CD8-positive, alpha-beta memory T cell (primary cell): ENCODE measurements at regions of chr11 and their contacts with region 1.

Region 1: GRCh38 chr11:535519-536454 is at the start of gene HRAS:
- DNase-seq: peak; percentile 94 to 97 (median 96)
- H3K4me3 ChIP-seq: peak within 1 kb of the TSS; percentile 64
- H3K4me3 Mint-ChIP-seq: peak within 1 kb of the TSS; percentile 88 to 98 (median 93)
- H3K27ac ChIP-seq: peak within 1 kb of the TSS; percentile 86
- H3K27ac Mint-ChIP-seq: peak within 1 kb of the TSS; percentile 93 to 100 (median 97)
- H3K4me1 ChIP-seq: peaks cover 37% of the 10 kb centered on the region
- H3K4me1 Mint-ChIP-seq: peaks cover 3 to 32% (median 11%) of the 10 kb centered on the region in 3 donors
- H3K27me3 ChIP-seq: no peaks in the 10 kb centered on the region
- H3K27me3 Mint-ChIP-seq: peaks cover 0 to 4% of the 10 kb centered on the region in 2 donors
- total RNA-seq, gene HRAS: 86.9 to 91.5 TPM

Region 2: GRCh38 chr11:506238-506994 is 29.4 kb before region 1 on chr11:
- CTCF ChIA-PET with region 1: interaction called, 3 read pairs
- POLR2A ChIA-PET with region 1: interaction called, 16 read pairs
- DNase-seq: peak; percentile 96 to 98 (median 96)
- H3K4me3 ChIP-seq: peak overlapping the region; percentile 95
- H3K4me3 Mint-ChIP-seq: peak overlapping the region; percentile 89 to 100 (median 98)
- H3K27ac ChIP-seq: peak overlapping the region; percentile 100
- H3K27ac Mint-ChIP-seq: peak overlapping the region; percentile 97 to 100 (median 100)
- H3K4me1 ChIP-seq: peaks cover 31% of the 10 kb centered on the region
- H3K4me1 Mint-ChIP-seq: peaks cover 11 to 38% (median 21%) of the 10 kb centered on the region in 3 donors
- H3K27me3 ChIP-seq: no peaks in the 10 kb centered on the region
- H3K27me3 Mint-ChIP-seq: peaks cover 0 to 4% of the 10 kb centered on the region in 2 donors

Region 3: GRCh38 chr11:554824-555472 is 19.2 kb after region 1 on chr11:
- CTCF ChIA-PET with region 1: interaction called, 16 read pairs
- POLR2A ChIA-PET with region 1: interaction called, 3 read pairs
- DNase-seq: peak; percentile 69 to 86 (median 70)
- H3K4me3 ChIP-seq: peak overlapping the region; percentile 45
- H3K4me3 Mint-ChIP-seq: peak overlapping the region in 6 of 7 donors; percentile 28 to 68 (median 58)
- H3K27ac ChIP-seq: no peak overlapping the region
- H3K27ac Mint-ChIP-seq: no peak overlapping the region
- H3K4me1 ChIP-seq: peaks cover 14% of the 10 kb centered on the region
- H3K4me1 Mint-ChIP-seq: peaks cover 3 to 14% (median 3%) of the 10 kb centered on the region in 3 donors
- H3K27me3 ChIP-seq: no peaks in the 10 kb centered on the region
- H3K27me3 Mint-ChIP-seq: no peaks in the 10 kb centered on the region

Region 4: GRCh38 chr11:575996-576768 is 40.4 kb after region 1 on chr11 and contains the start of gene PHRF1:
- CTCF ChIA-PET with region 1: interaction called, 3 read pairs
- POLR2A ChIA-PET with region 1: interaction called, 16 read pairs
- DNase-seq: peak; percentile 91 to 97 (median 96)
- H3K4me3 ChIP-seq: peak within 1 kb of the TSS; percentile 91
- H3K4me3 Mint-ChIP-seq: peak within 1 kb of the TSS; percentile 95 to 99 (median 97)
- H3K27ac ChIP-seq: peak within 1 kb of the TSS; percentile 81
- H3K27ac Mint-ChIP-seq: peak within 1 kb of the TSS; percentile 95 to 99 (median 98)
- H3K4me1 ChIP-seq: peaks cover 40% of the 10 kb centered on the region
- H3K4me1 Mint-ChIP-seq: peaks cover 40 to 56% (median 51%) of the 10 kb centered on the region in 3 donors
- H3K27me3 ChIP-seq: no peaks in the 10 kb centered on the region
- H3K27me3 Mint-ChIP-seq: peaks cover 8% of the 10 kb centered on the region in 2 donors
- total RNA-seq, gene PHRF1: 47.3 to 49.8 TPM